ENCODE measurements at regions of chr11 and their contacts with region 1.

Region 1: GRCh38 chr11:76680518-76681425 is 10.2 kb upstream of the LRRC32 start:
- DNase-seq: peak; percentile 79
- H3K4me3 Mint-ChIP-seq: no peak overlapping the region
- H3K27ac Mint-ChIP-seq: no peak overlapping the region
- H3K4me1 Mint-ChIP-seq: peaks cover 34% of the 10 kb centered on the region
- H3K27me3 Mint-ChIP-seq: peaks cover 53% of the 10 kb centered on the region

Region 2: GRCh38 chr11:76598426-76598839 is 82.3 kb before region 1 on chr11:
- CTCF ChIA-PET with region 1: interaction called, 13 read pairs
- DNase-seq: no peak
- H3K4me3 Mint-ChIP-seq: no peak overlapping the region
- H3K27ac Mint-ChIP-seq: no peak overlapping the region
- H3K4me1 Mint-ChIP-seq: peaks cover 39% of the 10 kb centered on the region
- H3K27me3 Mint-ChIP-seq: peaks cover 62% of the 10 kb centered on the region

Region 3: DNA sequence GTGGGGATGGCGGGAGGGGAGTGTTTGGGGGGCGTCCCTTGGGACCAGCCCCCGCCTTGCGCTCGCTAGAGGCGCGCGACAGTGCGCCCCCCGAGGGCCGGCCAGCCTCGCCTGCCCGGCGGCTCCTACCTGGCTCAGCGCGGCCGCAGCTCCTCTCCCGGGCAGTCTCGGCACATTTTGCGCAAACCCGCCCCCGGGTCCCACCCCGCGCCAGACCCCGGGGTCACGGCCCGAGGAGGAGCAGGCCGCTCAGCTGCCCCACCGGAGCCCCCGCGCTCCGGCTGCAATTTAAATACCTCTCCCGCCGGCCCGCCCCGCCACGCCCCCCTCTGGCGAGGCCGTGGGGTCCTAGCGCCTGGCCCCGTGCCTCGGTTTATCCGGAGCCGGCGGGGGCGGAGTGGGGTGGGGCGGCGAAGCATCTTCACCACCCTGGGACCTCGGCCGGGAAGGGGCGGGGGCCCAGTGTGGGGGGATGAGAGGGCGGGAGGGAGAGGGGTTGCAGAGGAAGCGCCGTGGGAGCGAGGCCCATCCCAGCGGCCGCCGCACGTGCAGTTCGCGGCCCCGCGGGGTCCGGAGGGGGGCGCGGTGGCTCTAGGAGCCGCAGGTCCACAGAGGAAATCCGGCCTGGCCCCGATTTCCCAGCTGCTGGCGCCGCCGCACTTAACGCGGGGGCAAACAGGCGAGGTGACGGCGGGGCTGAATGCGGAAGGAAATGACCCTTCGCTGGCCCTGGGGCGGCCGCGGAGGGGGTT is 10.1 kb before region 1 on chr11 and contains the start of gene LRRC32:
- CTCF ChIA-PET with region 1: interaction called, 14 read pairs
- DNase-seq: peak; percentile 39
- H3K4me3 Mint-ChIP-seq: peak within 1 kb of the TSS; percentile 59
- H3K27ac Mint-ChIP-seq: no peak within 1 kb of the TSS
- H3K4me1 Mint-ChIP-seq: peaks cover 29% of the 10 kb centered on the region
- H3K27me3 Mint-ChIP-seq: peaks cover 63% of the 10 kb centered on the region